Common myeloid progenitor, CD34-positive (primary cell): ENCODE measurements at regions of chr16 and their contacts with region 1.

Region 1: DNA sequence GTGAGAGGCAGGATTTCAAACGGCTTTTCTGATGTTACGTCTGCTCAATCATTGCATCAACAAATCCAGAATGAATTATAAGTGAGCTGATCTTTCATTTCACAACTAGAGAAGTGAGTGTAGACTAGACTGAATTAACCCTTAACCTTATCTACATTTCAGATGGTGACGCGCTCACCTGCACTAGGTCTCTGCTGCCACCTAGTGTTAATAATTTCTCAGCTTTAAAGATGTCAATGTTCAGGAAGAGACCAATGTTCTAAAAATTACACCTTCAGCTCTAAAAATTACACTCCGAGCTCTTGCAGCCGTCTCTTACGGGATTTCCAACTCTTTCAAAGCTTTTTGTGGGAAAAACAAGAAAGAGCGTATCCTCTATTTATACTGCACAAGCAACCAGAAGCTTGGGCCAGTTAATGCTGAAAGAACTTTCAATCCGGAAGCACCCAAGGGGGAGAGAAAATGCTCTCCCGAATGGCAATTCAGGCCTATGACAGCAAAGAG is 88.2 kb upstream of the FA2H start:
- DNase-seq: peak; percentile 57 to 69 (median 66)
- H3K4me3 ChIP-seq: no peak overlapping the region
- H3K27ac ChIP-seq: no peak overlapping the region
- H3K4me1 ChIP-seq: peaks cover 0 to 8% (median 2%) of the 10 kb centered on the region in 4 experiments
- H3K27me3 ChIP-seq: no peaks in the 10 kb centered on the region

Region 2: GRCh38 chr16:74709441-74709877 is 153.3 kb before region 1 on chr16:
- CTCF ChIA-PET with region 1: interaction called, 98 read pairs
- POLR2A ChIA-PET with region 1: no interaction called
- DNase-seq: peak; percentile 77 to 85 (median 77)
- H3K4me3 ChIP-seq: no peak overlapping the region
- H3K27ac ChIP-seq: no peak overlapping the region
- H3K4me1 ChIP-seq: peaks cover 0 to 4% (median 0%) of the 10 kb centered on the region in 4 experiments
- H3K27me3 ChIP-seq: no peaks in the 10 kb centered on the region

Region 3: DNA sequence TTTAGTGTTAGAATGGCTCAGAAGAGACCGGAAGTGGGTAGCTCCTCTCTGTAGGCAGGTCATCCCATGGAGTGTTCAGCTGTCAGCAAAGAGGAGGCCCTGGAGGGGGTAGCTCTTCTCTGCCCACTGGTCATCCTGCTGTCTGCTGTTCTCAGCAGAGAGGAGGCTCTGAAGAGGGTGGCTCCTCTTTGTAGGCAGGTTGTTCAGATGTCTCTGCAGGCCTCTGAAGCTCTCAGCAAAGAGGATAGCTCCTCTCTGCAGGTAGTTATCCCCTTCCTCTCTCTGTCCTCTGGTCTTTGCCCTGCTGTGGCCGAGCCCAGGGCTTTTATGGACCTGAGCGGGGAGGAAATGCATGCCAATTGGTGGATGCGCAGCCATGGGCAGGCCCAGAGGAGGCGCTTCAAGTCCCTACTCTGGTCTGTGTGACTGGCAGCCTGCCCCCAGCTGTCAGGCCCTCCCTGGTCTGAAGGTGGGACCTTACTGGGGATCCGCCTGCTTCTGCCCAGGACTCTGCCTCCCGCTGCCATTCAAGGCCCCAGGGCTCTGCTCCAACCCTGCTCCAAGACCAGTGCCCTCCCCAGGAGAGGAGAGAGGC is 55.6 kb before region 1 on chr16:
- CTCF ChIA-PET with region 1: interaction called, 61 read pairs
- POLR2A ChIA-PET with region 1: no interaction called
- DNase-seq: no peak
- H3K4me3 ChIP-seq: no peak overlapping the region
- H3K27ac ChIP-seq: no peak overlapping the region
- H3K4me1 ChIP-seq: no peaks in the 10 kb centered on the region
- H3K27me3 ChIP-seq: no peaks in the 10 kb centered on the region

Region 4: DNA sequence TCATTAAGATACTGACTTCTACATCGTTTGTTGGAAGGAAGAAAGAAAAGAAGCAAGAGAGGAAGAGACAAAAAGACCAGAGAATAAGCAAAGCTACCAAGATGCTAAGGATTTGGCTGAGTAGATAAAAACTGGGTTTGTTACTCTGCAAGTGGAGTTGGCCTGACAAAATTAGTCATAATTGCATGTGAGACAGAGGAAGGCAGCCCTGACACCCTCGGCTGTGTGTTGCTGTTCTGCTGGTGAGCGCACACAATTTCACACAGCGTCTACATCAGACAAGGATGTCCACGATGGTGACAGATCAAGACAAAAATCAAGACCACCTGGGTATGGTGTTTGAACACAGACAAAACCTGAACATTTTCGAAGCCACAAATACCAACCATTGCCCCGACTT is 12.8 kb before region 1 on chr16:
- CTCF ChIA-PET with region 1: interaction called, 18 read pairs
- POLR2A ChIA-PET with region 1: interaction called, 3 read pairs
- DNase-seq: no peak
- H3K4me3 ChIP-seq: no peak overlapping the region
- H3K27ac ChIP-seq: no peak overlapping the region
- H3K4me1 ChIP-seq: no peaks in the 10 kb centered on the region
- H3K27me3 ChIP-seq: no peaks in the 10 kb centered on the region